Left ventricle myocardium inferior (tissue), 1 donor: ENCODE measurements at regions of chr6 and their contacts with region 1.

Region 1: GRCh38 chr6:166786704-166787293 is 159.7 kb upstream of the RPS6KA2 start:
- DNase-seq: no peak
- H3K4me3 ChIP-seq: no peak overlapping the region
- H3K27ac ChIP-seq: no peak overlapping the region
- H3K4me1 ChIP-seq: no peaks in the 10 kb centered on the region
- H3K27me3 ChIP-seq: no peaks in the 10 kb centered on the region
- CTCF ChIP-seq: peak; percentile 83

Region 2: DNA sequence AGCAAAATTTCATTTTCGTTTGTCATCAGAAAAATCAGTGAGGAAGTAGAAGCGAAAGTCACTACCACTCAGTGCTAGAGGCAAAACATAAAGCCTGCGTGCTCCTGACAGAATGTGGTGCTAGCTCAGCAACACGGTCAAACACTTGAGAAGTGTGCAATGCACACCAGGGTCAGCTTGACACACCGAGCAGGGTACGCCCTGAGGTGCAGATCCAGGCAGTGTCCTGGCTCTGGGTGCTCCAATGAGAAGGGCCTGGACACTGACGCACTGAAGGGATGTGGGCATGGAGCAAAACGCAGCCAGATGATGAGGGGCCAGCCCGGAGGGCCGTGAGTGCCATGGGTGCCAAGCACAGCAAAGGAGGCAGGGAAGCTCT is 163.6 kb after region 1 on chr6:
- intact Hi-C with region 1: loop called (anchors 5 kb)
- DNase-seq: no peak
- H3K4me3 ChIP-seq: peak overlapping the region; percentile 56
- H3K27ac ChIP-seq: peak overlapping the region; percentile 84
- H3K4me1 ChIP-seq: peaks cover 8% of the 10 kb centered on the region
- H3K27me3 ChIP-seq: no peaks in the 10 kb centered on the region
- CTCF ChIP-seq: no peak

Region 3: DNA sequence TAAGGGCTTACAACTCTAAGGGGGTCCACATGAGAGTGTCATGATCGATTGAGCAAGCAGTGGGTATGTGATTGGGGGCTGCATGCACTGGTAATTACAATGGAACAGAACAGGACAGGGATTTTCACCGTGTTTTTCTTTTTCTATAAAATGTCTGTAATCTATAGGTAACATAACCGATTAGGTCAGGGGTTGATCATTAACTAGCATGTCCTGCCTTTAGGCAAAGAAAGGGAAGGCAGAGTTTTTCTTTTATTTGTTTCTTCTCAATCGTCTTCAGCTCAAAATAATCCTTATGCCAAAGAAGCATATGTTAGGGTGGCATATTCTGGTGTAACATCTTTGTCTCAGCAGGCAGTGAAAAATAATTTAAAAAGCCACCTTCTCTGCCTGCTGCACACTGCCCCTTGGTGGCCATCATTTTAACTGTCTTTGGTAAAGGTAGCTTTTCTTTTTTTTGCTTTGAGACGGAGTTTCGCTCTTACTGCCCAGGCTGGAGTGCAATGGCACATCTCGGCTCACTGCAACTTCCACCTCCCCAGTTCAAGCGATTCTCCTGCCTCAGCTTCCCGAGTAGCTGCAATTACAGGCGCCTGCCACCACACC is 202.7 kb after region 1 on chr6:
- intact Hi-C with region 1: loop called (anchors 10 kb)
- DNase-seq: no peak
- H3K4me3 ChIP-seq: no peak overlapping the region
- H3K27ac ChIP-seq: no peak overlapping the region
- H3K4me1 ChIP-seq: no peaks in the 10 kb centered on the region
- H3K27me3 ChIP-seq: no peaks in the 10 kb centered on the region
- CTCF ChIP-seq: peak; percentile 60

Region 4: DNA sequence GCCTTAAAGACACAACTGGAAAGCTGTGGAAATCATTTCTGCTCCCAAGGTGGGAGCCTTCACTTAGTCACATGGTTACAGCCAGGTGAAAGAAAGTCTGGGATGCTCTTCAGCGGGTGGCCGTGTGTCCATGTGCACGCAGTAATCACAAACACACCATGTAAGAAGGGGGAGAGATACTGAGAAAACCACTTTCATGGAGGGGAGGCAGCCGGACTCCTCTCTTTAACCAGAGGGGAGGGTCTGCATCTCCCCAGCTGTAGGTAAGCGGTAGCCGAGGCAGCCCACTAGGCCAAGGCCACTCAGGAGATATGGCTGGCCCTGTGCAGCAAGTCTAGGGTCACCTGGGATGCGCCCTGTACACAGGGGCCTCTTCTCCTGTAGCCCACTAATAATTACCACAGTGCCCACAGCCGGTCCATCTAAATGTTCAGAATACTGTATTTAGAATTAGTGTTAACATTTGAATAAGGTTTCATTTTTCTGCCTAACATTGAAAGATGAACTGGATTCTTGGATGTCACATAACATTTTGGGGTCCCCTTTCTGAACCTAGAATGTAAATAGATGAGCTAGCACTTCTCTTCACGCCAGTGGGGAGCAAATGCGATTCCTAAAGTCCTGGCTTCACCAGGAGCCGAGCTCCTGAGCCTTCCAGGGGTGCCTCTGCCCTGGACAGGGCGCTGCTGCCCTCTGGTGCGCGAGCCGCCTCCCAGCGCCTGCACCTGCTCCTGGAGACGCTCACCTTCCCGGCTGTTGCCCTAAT is 355.1 kb after region 1 on chr6:
- intact Hi-C with region 1: loop called (anchors 10 kb)
- DNase-seq: peak; percentile 28
- H3K4me3 ChIP-seq: no peak overlapping the region
- H3K27ac ChIP-seq: no peak overlapping the region
- H3K4me1 ChIP-seq: no peaks in the 10 kb centered on the region
- H3K27me3 ChIP-seq: peaks cover 94% of the 10 kb centered on the region
- CTCF ChIP-seq: peak; percentile 81